Activated CD4-positive, alpha-beta T cell treated with anti-CD3 and anti-CD28 coated beads, Interleukin-2, amount 10 ng/mL, durations not matched to agents 7 days and 5 days (primary cell): ENCODE measurements at regions of chr6 and their contacts with region 1.

Region 1: DNA sequence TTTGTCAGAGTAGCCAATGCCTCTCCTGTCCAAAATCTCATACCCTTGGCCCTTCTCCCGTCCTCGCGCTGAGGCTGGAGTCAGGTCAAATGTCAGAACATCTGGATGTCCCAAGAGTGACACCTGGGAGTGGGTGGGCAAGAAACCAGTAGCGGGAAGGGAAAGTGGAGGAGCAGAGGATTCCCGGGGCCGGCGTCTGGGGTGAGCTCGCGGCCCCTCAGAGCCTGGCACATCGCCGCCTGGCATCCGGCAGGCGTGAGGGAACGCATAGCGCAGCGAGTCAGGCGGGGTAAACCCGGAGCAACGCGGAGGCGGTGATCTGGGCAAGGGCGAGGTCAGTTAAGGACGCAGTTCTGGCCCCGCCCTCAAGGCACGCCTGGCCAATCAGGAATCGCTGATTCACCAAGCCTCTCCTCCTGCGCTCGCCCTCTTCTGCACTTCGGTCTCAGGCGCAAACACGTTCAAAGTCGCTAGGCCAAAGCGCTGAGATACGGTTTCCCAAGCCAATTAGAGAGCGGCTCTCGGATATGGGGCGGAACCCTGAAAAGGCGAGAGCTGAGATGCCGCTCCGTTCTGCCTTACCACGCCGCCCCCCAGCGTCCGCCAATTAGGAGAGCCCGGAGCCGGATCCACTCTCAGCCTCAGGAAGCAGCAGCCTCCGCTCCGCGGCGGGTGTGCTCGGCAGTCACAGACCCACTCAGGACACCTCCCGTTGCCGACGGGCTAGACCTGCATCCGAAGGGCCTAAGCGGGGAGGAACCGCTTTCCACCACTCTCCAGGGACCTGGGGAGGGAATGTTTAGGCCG is 22.5 kb downstream of the VPS52 start:
- DNase-seq: peak; percentile 98
- H3K4me3 Mint-ChIP-seq: peak overlapping the region; percentile 86
- H3K27ac Mint-ChIP-seq: peak overlapping the region; percentile 97
- H3K4me1 Mint-ChIP-seq: peaks cover 39% of the 10 kb centered on the region
- H3K27me3 Mint-ChIP-seq: peaks cover 4% of the 10 kb centered on the region

Region 2: GRCh38 chr6:32838114-32838958 is 410.8 kb before region 1 on chr6 and contains the start of gene TAP2:
- CTCF ChIA-PET with region 1: no interaction called
- POLR2A ChIA-PET with region 1: no interaction called
- DNase-seq: peak; percentile 97
- H3K4me3 Mint-ChIP-seq: peak within 1 kb of the TSS; percentile 89
- H3K27ac Mint-ChIP-seq: peak within 1 kb of the TSS; percentile 100
- H3K4me1 Mint-ChIP-seq: peaks cover 84% of the 10 kb centered on the region
- H3K27me3 Mint-ChIP-seq: no peaks in the 10 kb centered on the region
- total RNA-seq, gene TAP2: 332 to 337 TPM

Region 3: DNA sequence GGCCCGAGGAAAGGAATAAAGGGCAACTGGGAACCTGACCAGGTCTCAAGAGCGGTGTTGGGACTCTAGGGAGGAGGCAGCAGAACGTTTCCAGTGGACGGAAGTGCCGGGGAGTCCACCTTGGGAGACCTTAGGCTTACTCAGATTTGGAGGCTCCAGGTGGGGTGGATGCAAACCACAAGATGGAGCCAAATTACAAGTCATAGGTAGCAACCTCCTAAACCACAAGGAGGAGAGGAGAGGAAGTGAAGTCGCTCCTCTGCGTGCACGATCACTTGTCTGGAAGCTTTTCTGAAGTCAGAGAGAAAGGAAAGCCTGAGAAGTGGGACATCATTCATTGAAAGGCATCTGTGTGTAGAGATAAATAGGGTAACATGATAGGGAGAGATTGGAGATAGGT is 249.1 kb before region 1 on chr6:
- CTCF ChIA-PET with region 1: no interaction called
- POLR2A ChIA-PET with region 1: no interaction called
- DNase-seq: peak; percentile 49
- H3K4me3 Mint-ChIP-seq: no peak overlapping the region
- H3K27ac Mint-ChIP-seq: no peak overlapping the region
- H3K4me1 Mint-ChIP-seq: peaks cover 11% of the 10 kb centered on the region
- H3K27me3 Mint-ChIP-seq: peaks cover 47% of the 10 kb centered on the region

Region 4: DNA sequence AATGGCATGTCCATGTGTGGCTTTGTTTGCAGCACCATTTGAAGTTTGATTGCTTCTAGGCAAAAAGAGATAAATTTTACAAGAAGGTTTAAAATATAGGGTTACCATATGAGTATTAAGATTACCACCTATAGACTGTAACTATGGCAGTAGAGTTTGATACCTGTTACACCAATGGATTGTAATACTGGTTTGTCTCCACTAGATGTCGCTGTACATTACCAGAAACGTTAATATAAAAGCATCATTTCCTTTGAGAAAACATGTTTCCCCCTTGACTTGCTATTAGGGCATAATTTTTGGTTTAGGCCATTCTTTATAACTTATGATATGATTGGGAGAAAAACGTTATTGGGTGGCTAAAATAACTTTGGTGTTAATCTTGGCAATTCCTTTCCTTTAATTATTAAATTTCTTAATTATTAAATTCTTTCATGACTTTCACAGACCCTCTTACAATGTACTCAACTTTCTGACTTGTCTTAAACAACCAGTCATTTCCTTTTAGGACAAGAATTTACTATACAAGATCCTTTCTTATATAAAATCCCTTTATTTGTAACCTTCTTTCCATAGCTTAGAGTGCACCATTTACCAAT is 130.5 kb before region 1 on chr6:
- CTCF ChIA-PET with region 1: interaction called, 30 read pairs
- POLR2A ChIA-PET with region 1: no interaction called
- DNase-seq: peak; percentile 63
- H3K4me3 Mint-ChIP-seq: no peak overlapping the region
- H3K27ac Mint-ChIP-seq: no peak overlapping the region
- H3K4me1 Mint-ChIP-seq: peaks cover 10% of the 10 kb centered on the region
- H3K27me3 Mint-ChIP-seq: peaks cover 63% of the 10 kb centered on the region

Region 5: GRCh38 chr6:33161354-33162331 is 87.5 kb before region 1 on chr6:
- CTCF ChIA-PET with region 1: interaction called, 14 read pairs
- POLR2A ChIA-PET with region 1: no interaction called
- DNase-seq: peak; percentile 82
- H3K4me3 Mint-ChIP-seq: peak overlapping the region; percentile 77
- H3K27ac Mint-ChIP-seq: peak overlapping the region; percentile 87
- H3K4me1 Mint-ChIP-seq: peaks cover 19% of the 10 kb centered on the region
- H3K27me3 Mint-ChIP-seq: peaks cover 3% of the 10 kb centered on the region

Region 6: DNA sequence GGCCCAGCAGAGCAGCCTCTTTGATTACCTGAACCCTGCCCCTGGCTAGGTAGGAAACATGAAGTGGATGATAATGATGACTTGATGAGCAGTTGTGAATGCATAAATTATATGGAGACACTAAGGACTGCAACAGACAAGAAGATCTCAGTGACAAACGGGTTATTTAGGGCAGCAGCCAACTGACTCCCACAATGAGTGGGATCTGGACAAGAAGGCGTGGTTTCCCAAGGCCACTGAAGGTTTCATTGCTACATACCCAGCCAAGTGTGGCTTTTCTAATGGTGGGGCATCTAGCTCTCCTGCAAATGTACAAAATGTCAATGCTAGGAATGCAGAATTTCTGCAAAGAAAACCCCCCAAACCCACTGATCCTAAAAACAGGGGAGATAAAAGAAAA is 11.4 kb before region 1 on chr6:
- CTCF ChIA-PET with region 1: interaction called, 19 read pairs
- POLR2A ChIA-PET with region 1: no interaction called
- DNase-seq: no peak
- H3K4me3 Mint-ChIP-seq: no peak overlapping the region
- H3K27ac Mint-ChIP-seq: no peak overlapping the region
- H3K4me1 Mint-ChIP-seq: peaks cover 13% of the 10 kb centered on the region
- H3K27me3 Mint-ChIP-seq: peaks cover 36% of the 10 kb centered on the region

Region 7: GRCh38 chr6:33271458-33272274 is 22.5 kb after region 1 on chr6 and contains the starts of genes RPS18 and VPS52:
- CTCF ChIA-PET with region 1: interaction called, 18 read pairs
- POLR2A ChIA-PET with region 1: interaction called, 7 read pairs
- DNase-seq: peak; percentile 96
- H3K4me3 Mint-ChIP-seq: peak within 1 kb of the TSS; percentile 95
- H3K27ac Mint-ChIP-seq: peak within 1 kb of the TSS; percentile 98
- H3K4me1 Mint-ChIP-seq: peaks cover 61% of the 10 kb centered on the region
- H3K27me3 Mint-ChIP-seq: no peaks in the 10 kb centered on the region
- total RNA-seq, gene RPS18: 2,438 to 3,135 TPM
- total RNA-seq, gene VPS52: 79.1 to 84.0 TPM

Region 8: GRCh38 chr6:33288921-33289748 is 40.0 kb after region 1 on chr6 and contains the starts of genes PFDN6 and WDR46:
- CTCF ChIA-PET with region 1: interaction called, 12 read pairs
- POLR2A ChIA-PET with region 1: no interaction called
- DNase-seq: peak; percentile 90
- H3K4me3 Mint-ChIP-seq: peak within 1 kb of the TSS; percentile 96
- H3K27ac Mint-ChIP-seq: peak within 1 kb of the TSS; percentile 82
- H3K4me1 Mint-ChIP-seq: peaks cover 44% of the 10 kb centered on the region
- H3K27me3 Mint-ChIP-seq: no peaks in the 10 kb centered on the region
- total RNA-seq, gene PFDN6: 57.0 to 67.2 TPM
- total RNA-seq, gene WDR46: 53.4 to 54.8 TPM

Region 9: DNA sequence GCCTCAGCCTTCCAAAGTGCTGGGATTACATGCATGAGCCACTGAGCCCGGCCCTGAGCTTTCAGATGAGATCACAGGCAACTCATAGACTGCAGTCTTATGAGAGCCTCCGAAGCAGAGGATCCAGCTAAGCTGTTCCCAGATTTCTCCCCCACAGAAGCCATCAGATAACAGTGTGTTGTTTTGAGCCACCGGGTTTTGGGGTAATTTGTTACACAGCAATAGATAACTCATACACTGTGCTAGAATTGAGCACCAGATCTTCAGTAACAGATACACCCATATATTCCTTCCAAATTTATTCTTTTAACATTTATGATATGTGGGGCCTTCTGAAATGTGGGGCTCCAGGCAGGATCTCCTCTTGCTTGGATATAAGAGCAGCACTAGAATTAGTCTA is 87.4 kb after region 1 on chr6:
- CTCF ChIA-PET with region 1: no interaction called
- POLR2A ChIA-PET with region 1: no interaction called
- DNase-seq: no peak
- H3K4me3 Mint-ChIP-seq: no peak overlapping the region
- H3K27ac Mint-ChIP-seq: peak overlapping the region; percentile 2
- H3K4me1 Mint-ChIP-seq: peaks cover 21% of the 10 kb centered on the region
- H3K27me3 Mint-ChIP-seq: no peaks in the 10 kb centered on the region